Activated CD8-positive, alpha-beta memory T cell treated with anti-CD3 and anti-CD28 coated beads, Interleukin-2, amount 10 ng/mL, durations not matched to agents 7 days and 5 days (primary cell): ENCODE measurements at regions of chr11 and their contacts with region 1.

Region 1: DNA sequence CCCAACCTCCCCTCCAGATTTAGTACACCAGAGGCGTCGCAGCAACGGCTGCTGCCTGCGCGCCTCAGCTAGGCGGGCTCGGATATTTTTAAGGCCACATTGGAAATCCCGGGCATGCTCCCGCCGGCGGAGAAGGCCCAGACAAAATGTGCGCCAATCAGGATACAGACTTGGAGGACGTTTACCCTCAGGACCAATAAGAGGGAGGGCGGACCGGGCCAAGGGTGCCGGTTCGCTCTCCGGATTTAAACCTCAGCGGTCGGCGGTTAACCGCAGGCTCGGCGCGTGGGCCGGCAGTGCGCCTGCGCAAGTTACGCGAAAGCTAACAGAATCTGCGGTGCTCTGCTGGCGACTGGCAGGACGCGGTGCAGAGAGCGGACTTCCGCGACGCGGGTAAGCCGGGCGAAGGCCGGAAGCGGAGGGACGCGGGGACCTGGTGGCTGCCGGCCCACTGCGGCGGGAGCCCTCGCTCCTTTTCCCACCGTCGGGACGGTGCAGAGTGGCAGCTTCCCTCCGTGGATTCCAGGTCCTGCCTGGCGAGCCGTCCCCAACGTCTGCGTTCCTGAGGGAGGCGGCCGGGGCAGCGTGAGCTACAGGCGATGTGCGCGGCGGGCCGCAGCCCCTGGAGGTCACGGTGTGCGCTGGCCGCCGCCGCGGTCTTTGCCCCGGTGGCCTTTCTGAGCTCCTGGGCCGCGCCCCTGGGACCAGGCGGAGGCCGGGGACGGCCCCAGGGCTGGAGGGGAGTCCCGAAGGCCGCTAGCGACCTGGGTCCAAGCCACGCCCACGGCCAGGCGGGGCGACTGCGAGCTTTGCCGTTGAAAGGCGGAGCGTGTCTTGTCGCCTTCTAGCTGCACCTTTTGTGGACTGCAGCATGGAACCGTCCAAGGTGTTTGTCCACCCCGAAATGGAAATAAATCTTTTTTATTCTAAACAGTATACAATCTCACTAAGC is at the start of gene HYLS1:
- DNase-seq: peak; percentile 97
- ATAC-seq: peak; percentile 89
- H3K4me3 Mint-ChIP-seq: peak within 1 kb of the TSS; percentile 81
- H3K27ac Mint-ChIP-seq: peak within 1 kb of the TSS; percentile 98
- H3K4me1 Mint-ChIP-seq: peaks cover 34% of the 10 kb centered on the region
- H3K27me3 Mint-ChIP-seq: peaks cover 6% of the 10 kb centered on the region
- total RNA-seq, gene HYLS1: 8.9 to 11.2 TPM

Region 2: GRCh38 chr11:125625630-125626287 is 261.9 kb before region 1 on chr11:
- CTCF ChIA-PET with region 1: interaction called, 15 read pairs
- DNase-seq: peak; percentile 91
- ATAC-seq: peak; percentile 91
- H3K4me3 Mint-ChIP-seq: peak overlapping the region; percentile 88
- H3K27ac Mint-ChIP-seq: peak overlapping the region; percentile 92
- H3K4me1 Mint-ChIP-seq: peaks cover 36% of the 10 kb centered on the region
- H3K27me3 Mint-ChIP-seq: no peaks in the 10 kb centered on the region

Region 3: GRCh38 chr11:125902927-125903710 is 15.5 kb after region 1 on chr11 and contains the start of gene PUS3:
- CTCF ChIA-PET with region 1: interaction called, 26 read pairs
- DNase-seq: peak; percentile 93
- ATAC-seq: peak; percentile 96
- H3K4me3 Mint-ChIP-seq: peak within 1 kb of the TSS; percentile 99
- H3K27ac Mint-ChIP-seq: peak within 1 kb of the TSS; percentile 88
- H3K4me1 Mint-ChIP-seq: peaks cover 39% of the 10 kb centered on the region
- H3K27me3 Mint-ChIP-seq: peaks cover 39% of the 10 kb centered on the region
- total RNA-seq, gene PUS3: 11.0 to 13.1 TPM

Region 4: DNA sequence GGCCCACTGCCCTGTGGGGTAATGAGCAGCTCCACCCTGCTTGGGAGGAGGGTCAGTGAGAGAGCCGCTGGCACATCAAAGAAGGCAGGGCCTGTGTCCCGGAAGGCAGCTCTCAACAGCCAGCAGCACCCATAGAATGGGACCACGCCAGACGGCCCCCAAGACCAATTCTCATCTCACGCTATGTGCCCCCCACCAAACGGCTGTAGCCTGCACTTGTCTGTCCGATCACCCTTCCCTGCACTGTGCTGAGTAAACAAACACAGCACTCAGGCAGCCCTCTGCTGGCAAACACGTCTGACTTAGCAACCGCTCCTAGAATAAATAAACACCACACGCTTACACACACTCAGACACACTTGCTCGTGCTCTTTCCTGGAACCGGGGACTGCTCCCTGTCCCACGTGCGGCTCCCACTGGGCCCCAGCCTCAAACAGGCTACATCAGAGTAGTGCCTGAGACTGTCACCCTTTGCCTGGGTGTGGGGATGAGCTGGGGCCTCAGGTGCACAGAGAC is 228.2 kb after region 1 on chr11:
- CTCF ChIA-PET with region 1: no interaction called
- DNase-seq: no peak
- ATAC-seq: peak; percentile 16
- H3K4me3 Mint-ChIP-seq: no peak overlapping the region
- H3K27ac Mint-ChIP-seq: no peak overlapping the region
- H3K4me1 Mint-ChIP-seq: peaks cover 2% of the 10 kb centered on the region
- H3K27me3 Mint-ChIP-seq: no peaks in the 10 kb centered on the region